Mammary epithelial cell (primary cell): ENCODE measurements at regions of chr1 and their contacts with region 1.

Region 1: GRCh38 chr1:75937034-75937433 is 4.8 kb upstream of the ASB17 start:
- DNase-seq: peak; percentile 36
- H3K4me3 ChIP-seq: no peak overlapping the region
- H3K27ac ChIP-seq: no peak overlapping the region
- H3K4me1 ChIP-seq: no peaks in the 10 kb centered on the region
- H3K27me3 ChIP-seq: no peaks in the 10 kb centered on the region
- CTCF ChIP-seq: no peak

Region 2: DNA sequence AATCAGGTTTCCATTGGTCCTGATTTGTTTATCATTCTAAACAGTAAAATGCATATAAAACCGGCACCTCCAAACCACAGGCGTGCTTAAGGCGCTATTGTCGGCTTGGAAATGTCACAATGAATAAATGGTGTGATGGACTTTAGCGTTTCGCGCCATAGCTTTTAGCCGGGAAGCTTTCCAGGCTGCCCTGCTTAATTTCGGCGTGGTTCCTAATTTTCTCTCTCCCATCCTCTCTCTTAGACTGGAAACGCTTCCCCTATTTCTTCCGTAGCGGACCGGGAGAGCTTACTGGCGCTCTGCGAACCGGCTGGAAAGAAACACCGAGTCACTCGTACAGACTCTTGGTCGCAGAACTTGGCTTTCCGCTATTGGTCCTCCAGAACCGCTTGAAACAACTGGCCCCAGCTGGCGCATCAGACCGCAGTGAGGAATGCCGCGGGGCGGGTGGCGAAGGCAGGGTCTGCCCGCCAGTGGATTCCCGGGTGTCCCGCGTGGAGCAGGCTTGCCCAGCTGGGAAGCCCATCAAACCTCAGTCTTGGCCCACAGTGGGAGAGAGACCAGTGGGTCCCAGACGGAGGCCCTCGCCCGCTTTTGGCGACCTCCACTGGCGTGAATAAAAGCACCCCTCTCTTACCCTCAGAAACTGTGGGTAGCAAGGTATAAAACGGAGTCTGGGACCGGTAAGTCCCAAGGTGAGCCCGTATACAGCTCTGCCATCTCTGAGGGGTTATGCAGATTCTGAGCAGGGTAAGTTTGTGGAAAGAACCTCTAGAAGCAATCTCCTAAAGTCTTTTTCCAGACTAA is 806.8 kb before region 1 on chr1:
- CTCF ChIA-PET with region 1: no interaction called
- dilution Hi-C with region 1: no loop called
- in situ Hi-C with region 1: no loop called
- intact Hi-C with region 1: no loop called
- DNase-seq: no peak
- H3K4me3 ChIP-seq: no peak overlapping the region
- H3K27ac ChIP-seq: no peak overlapping the region
- H3K4me1 ChIP-seq: peaks cover 3% of the 10 kb centered on the region
- H3K27me3 ChIP-seq: peaks cover 80% of the 10 kb centered on the region
- CTCF ChIP-seq: no peak

Region 3: GRCh38 chr1:75980972-75981897 is 44.2 kb after region 1 on chr1:
- CTCF ChIA-PET with region 1: no interaction called
- dilution Hi-C with region 1: loop called (anchors 5 kb)
- in situ Hi-C with region 1: no loop called
- intact Hi-C with region 1: no loop called
- DNase-seq: no peak
- H3K4me3 ChIP-seq: no peak overlapping the region
- H3K27ac ChIP-seq: no peak overlapping the region
- H3K4me1 ChIP-seq: no peaks in the 10 kb centered on the region
- H3K27me3 ChIP-seq: peaks cover 2% of the 10 kb centered on the region
- CTCF ChIP-seq: no peak